IMR-90 (cell line): ENCODE measurements at regions of chr7 and their contacts with region 1.

Region 1: GRCh38 chr7:143380255-143380645 is 895 bp upstream of the ZYX start:
- DNase-seq: peak; percentile 82
- ATAC-seq: peak; percentile 33
- H3K4me3 ChIP-seq: peak overlapping the region; percentile 68
- H3K27ac ChIP-seq: peak overlapping the region; percentile 100
- H3K4me1 ChIP-seq: peaks cover 30% of the 10 kb centered on the region
- H3K27me3 ChIP-seq: no peaks in the 10 kb centered on the region
- CTCF ChIP-seq: peak; percentile 85
- POLR2A ChIP-seq: no peak
- RAD21 ChIP-seq: peak; percentile 54

Region 2: DNA sequence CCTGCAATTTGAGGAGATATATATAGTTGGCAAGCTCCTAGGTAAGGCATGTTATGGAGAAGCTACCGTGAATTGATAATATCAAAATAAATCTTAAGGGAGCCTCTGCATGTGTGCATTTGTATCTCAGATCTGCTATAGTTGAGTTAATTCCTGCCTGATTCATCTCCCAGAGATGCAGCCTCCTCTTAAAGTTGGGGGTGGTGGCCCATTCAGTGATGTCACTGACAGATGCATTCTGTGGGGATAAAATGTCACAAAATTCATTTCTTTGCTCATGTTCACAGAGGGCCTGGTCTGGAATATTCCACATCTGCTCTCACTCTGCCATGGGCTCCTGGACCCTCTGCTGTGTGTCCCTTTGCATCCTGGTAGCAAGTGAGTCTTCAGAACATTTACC is 816.8 kb before region 1 on chr7:
- CTCF ChIA-PET with region 1: no interaction called
- POLR2A ChIA-PET with region 1: no interaction called
- dilution Hi-C with region 1: no loop called
- in situ Hi-C with region 1: no loop called
- intact Hi-C with region 1: loop called (anchors 5 kb)
- DNase-seq: peak; percentile 51
- ATAC-seq: peak; percentile 69
- H3K4me3 ChIP-seq: no peak overlapping the region
- H3K27ac ChIP-seq: peak overlapping the region; percentile 55
- H3K4me1 ChIP-seq: peaks cover 24% of the 10 kb centered on the region
- H3K27me3 ChIP-seq: no peaks in the 10 kb centered on the region
- CTCF ChIP-seq: no peak
- POLR2A ChIP-seq: no peak
- RAD21 ChIP-seq: no peak

Region 3: GRCh38 chr7:142908921-142909890 is 471.0 kb before region 1 on chr7:
- CTCF ChIA-PET with region 1: no interaction called
- POLR2A ChIA-PET with region 1: no interaction called
- dilution Hi-C with region 1: no loop called
- in situ Hi-C with region 1: no loop called
- intact Hi-C with region 1: no loop called
- DNase-seq: no peak
- ATAC-seq: no peak
- H3K4me3 ChIP-seq: no peak overlapping the region
- H3K27ac ChIP-seq: no peak overlapping the region
- H3K4me1 ChIP-seq: no peaks in the 10 kb centered on the region
- H3K27me3 ChIP-seq: no peaks in the 10 kb centered on the region
- CTCF ChIP-seq: no peak
- POLR2A ChIP-seq: no peak
- RAD21 ChIP-seq: no peak

Region 4: DNA sequence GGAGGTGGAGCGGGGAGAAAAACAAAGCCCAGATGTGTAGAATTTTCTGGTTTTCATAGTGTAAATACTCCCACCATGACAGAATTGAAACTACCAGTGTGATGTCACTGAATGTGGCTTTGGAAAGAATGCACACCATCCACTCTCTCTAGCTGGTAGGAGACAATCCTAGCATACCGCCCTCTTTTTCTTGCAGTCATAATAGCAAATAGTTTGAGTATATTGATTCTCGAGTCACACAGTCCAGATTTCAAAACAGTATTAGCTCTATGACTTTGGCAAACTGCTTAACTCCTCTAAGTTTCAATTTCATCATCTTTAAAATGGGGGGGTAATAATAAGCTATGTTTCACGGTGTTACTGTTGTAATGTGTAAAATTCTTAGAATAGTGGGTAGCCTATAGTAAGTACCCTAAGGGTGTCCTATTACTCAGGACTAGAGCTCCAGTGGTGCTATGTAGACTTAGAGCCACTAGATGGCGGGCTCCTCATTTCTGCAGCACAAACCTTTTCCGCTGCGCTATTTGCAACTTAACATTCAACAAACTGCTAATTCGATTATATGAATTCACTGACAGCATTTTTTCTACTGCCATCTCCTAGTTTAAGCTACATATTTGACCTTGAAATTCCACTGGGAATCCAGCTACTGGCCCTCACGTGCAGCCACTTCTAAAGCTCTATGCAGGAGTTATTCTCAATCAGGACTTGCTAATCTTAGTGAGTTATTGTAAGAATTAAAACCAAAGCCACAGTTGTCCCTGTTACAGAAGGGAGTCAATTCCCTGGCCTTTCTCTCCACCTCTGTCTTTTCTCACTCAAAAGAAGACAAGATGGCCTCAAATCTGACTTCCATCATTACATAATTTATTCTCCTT is 139.7 kb before region 1 on chr7:
- CTCF ChIA-PET with region 1: interaction called, 9 read pairs
- POLR2A ChIA-PET with region 1: no interaction called
- dilution Hi-C with region 1: no loop called
- in situ Hi-C with region 1: no loop called
- intact Hi-C with region 1: loop called (anchors 5 kb)
- DNase-seq: peak; percentile 86
- ATAC-seq: peak; percentile 95
- H3K4me3 ChIP-seq: no peak overlapping the region
- H3K27ac ChIP-seq: no peak overlapping the region
- H3K4me1 ChIP-seq: peaks cover 4% of the 10 kb centered on the region; the same call in 1 of the 2 replicates
- H3K27me3 ChIP-seq: peaks cover 4% of the 10 kb centered on the region; the same call in 1 of the 2 replicates
- CTCF ChIP-seq: peak; percentile 91
- POLR2A ChIP-seq: no peak
- RAD21 ChIP-seq: peak; percentile 89

Region 5: GRCh38 chr7:143263266-143264195 is 116.7 kb before region 1 on chr7 and contains the start of gene GSTK1:
- CTCF ChIA-PET with region 1: interaction called, 10 read pairs
- POLR2A ChIA-PET with region 1: no interaction called
- dilution Hi-C with region 1: no loop called
- in situ Hi-C with region 1: no loop called
- intact Hi-C with region 1: no loop called
- DNase-seq: peak; percentile 54
- ATAC-seq: peak; percentile 99
- H3K4me3 ChIP-seq: peak within 1 kb of the TSS; percentile 97
- H3K27ac ChIP-seq: peak within 1 kb of the TSS; percentile 97
- H3K4me1 ChIP-seq: peaks cover 2% of the 10 kb centered on the region
- H3K27me3 ChIP-seq: no peaks in the 10 kb centered on the region
- CTCF ChIP-seq: no peak
- POLR2A ChIP-seq: no peak
- RAD21 ChIP-seq: no peak
- total RNA-seq, gene GSTK1: 60.0 and 64.9 TPM in 2 replicates

Region 6: GRCh38 chr7:143287935-143288826 is 92.1 kb before region 1 on chr7 and contains the start of gene CASP2:
- CTCF ChIA-PET with region 1: no interaction called
- POLR2A ChIA-PET with region 1: no interaction called
- dilution Hi-C with region 1: no loop called
- in situ Hi-C with region 1: no loop called
- intact Hi-C with region 1: loop called (anchors 1 kb)
- DNase-seq: peak; percentile 94
- ATAC-seq: peak; percentile 98
- H3K4me3 ChIP-seq: peak within 1 kb of the TSS; percentile 93
- H3K27ac ChIP-seq: peak within 1 kb of the TSS; percentile 90
- H3K4me1 ChIP-seq: peaks cover 5% of the 10 kb centered on the region; the same call in 1 of the 2 replicates
- H3K27me3 ChIP-seq: no peaks in the 10 kb centered on the region
- CTCF ChIP-seq: peak; percentile 38
- POLR2A ChIP-seq: peak; percentile 65; the same call in 1 of the 2 replicates
- RAD21 ChIP-seq: peak; percentile 20; the same call in 1 of the 2 replicates
- total RNA-seq, gene CASP2: 18.6 and 25.6 TPM in 2 replicates

Region 7: DNA sequence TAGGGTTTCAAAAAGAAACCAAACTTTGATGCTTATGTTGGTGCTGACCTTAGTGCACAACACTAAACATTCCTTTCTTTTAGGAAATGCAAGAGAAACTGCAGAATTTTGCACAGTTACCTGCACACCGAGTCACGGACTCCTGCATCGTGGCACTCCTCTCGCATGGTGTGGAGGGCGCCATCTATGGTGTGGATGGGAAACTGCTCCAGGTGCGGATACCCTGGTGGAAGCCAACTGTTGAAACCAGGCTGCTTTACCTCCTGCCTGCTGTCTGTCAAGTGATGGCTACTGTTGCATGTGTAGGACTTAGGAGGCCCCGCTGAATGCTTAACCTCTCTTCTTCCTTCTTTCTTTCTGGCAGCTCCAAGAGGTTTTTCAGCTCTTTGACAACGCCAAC is 80.4 kb before region 1 on chr7:
- CTCF ChIA-PET with region 1: interaction called, 12 read pairs
- POLR2A ChIA-PET with region 1: no interaction called
- dilution Hi-C with region 1: no loop called
- in situ Hi-C with region 1: no loop called
- intact Hi-C with region 1: no loop called
- DNase-seq: no peak
- ATAC-seq: no peak; the same call in 1 of the 2 replicates
- H3K4me3 ChIP-seq: no peak overlapping the region
- H3K27ac ChIP-seq: no peak overlapping the region
- H3K4me1 ChIP-seq: peaks cover 18% of the 10 kb centered on the region
- H3K27me3 ChIP-seq: no peaks in the 10 kb centered on the region
- CTCF ChIP-seq: peak; percentile 35
- POLR2A ChIP-seq: no peak
- RAD21 ChIP-seq: no peak

Region 8: DNA sequence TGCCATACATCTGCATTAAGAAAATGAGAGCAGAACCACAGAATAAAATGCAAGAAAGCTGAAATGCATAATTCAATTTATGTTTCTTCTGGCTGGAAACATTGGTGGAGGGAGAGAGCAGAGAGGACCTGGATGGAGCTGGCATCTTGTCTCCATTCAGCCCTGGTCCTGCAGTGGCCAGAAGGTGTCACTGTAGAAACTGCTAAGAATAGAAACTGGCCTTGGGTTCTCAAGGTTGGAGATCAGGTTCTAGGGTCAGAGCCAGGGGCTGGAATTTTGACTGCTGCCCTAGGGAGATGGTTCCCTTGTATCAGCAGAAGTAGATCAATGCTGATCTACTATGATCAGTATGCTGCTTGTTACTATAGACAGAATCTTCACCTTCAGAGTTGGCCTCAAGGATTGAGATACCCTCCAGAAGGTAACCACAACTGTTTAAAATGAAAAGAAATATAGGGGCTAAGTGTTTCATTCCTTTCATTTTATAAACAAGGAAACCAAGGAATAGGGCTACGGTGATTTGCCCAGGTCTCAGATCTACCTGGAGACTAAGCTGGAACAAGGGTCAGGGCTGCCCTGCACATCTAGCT is 110.6 kb after region 1 on chr7:
- CTCF ChIA-PET with region 1: no interaction called
- POLR2A ChIA-PET with region 1: no interaction called
- dilution Hi-C with region 1: no loop called
- in situ Hi-C with region 1: no loop called
- intact Hi-C with region 1: no loop called
- DNase-seq: no peak
- ATAC-seq: peak; percentile 48
- H3K4me3 ChIP-seq: no peak overlapping the region
- H3K27ac ChIP-seq: no peak overlapping the region
- H3K4me1 ChIP-seq: peaks cover 7% of the 10 kb centered on the region
- H3K27me3 ChIP-seq: no peaks in the 10 kb centered on the region
- CTCF ChIP-seq: peak; percentile 45
- POLR2A ChIP-seq: no peak
- RAD21 ChIP-seq: peak; percentile 35; the same call in 1 of the 2 replicates